Endothelial cell of umbilical vein (primary cell): ENCODE measurements at regions of chr2 and their contacts with region 1.

Region 1: DNA sequence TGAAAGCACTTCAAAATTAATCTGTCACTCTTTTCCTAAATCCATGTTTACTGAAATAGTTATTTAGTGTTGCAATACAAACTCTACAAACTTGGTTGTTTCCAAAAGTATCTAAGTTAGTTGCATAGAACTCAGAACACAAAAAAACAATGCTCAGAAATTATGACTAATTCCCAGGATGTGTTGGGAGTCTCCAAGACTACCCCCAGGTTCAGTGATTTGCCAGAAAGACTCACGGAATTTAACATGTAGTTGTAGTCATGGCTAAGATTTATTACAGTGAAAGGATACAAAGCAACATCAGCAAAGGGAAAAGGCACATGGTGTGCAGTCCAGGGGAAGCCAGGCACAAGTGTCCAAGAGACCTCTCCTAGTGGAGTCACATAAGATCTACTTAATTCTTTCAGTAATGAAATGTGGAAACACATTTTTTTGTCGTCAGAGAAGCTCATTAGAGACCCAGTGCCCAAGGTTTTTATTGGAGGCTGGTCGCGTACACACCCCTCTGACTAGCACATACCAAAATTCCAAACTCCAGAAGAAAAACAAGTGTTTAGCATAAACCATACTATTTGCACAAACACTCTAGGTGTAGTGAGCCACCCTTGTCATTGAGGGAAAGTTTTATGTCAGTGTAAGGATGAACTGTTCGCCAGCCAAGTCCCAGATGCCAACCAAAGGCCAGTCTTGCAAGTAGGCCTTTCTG is 43.3 kb upstream of the CYP20A1 start:
- DNase-seq: peak; percentile 8
- H3K4me3 ChIP-seq: no peak overlapping the region
- H3K27ac ChIP-seq: no peak overlapping the region
- H3K4me1 ChIP-seq: no peaks in the 10 kb centered on the region
- H3K27me3 ChIP-seq: no peaks in the 10 kb centered on the region
- CTCF ChIP-seq: no peak
- POLR2A ChIP-seq: no peak

Region 2: GRCh38 chr2:202831242-202832220 is 364.0 kb before region 1 on chr2:
- CTCF ChIA-PET with region 1: no interaction called
- POLR2A ChIA-PET with region 1: no interaction called
- dilution Hi-C with region 1: no loop called
- intact Hi-C with region 1: loop called (anchors 10 kb)
- DNase-seq: peak; percentile 75
- H3K4me3 ChIP-seq: no peak overlapping the region
- H3K27ac ChIP-seq: no peak overlapping the region
- H3K4me1 ChIP-seq: peaks cover 15% of the 10 kb centered on the region
- H3K27me3 ChIP-seq: no peaks in the 10 kb centered on the region
- CTCF ChIP-seq: peak; percentile 56 to 61
- POLR2A ChIP-seq: no peak

Region 3: DNA sequence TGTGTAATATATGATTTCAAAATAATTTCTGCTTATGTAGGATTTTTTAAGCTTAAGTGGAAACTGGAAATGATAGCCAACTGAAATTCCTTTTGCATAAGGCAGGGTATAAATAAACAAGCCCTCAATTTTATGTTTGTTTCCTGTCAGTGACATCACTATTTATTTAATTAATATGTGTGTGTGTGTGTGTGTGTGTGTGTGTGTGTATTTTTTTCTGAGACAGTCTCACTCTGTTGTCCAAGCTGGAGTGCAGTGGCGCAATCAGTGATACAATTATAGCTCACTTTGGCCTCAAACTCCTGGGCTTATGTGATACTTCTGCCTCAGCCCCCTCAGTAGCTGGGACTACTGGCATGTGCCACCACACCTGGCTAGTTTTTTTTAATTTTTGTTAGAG is 14.1 kb after region 1 on chr2:
- CTCF ChIA-PET with region 1: no interaction called
- POLR2A ChIA-PET with region 1: no interaction called
- dilution Hi-C with region 1: no loop called
- intact Hi-C with region 1: no loop called
- DNase-seq: no peak
- H3K4me3 ChIP-seq: no peak overlapping the region
- H3K27ac ChIP-seq: no peak overlapping the region
- H3K4me1 ChIP-seq: no peaks in the 10 kb centered on the region
- H3K27me3 ChIP-seq: no peaks in the 10 kb centered on the region
- CTCF ChIP-seq: no peak
- POLR2A ChIP-seq: no peak